Body of pancreas (tissue), 4 donors: ENCODE measurements at regions of chr3 and their contacts with region 1.

Region 1: GRCh38 chr3:46903331-46904071 is 26.0 kb downstream of the PTH1R start:
- DNase-seq: peak in 1 of 4 donors; percentile 14
- ATAC-seq: no peak
- H3K4me3 ChIP-seq: no peak overlapping the region
- H3K27ac ChIP-seq: no peak overlapping the region
- H3K4me1 ChIP-seq: peaks cover 10% of the 10 kb centered on the region
- H3K27me3 ChIP-seq: peaks cover 0 to 2% of the 10 kb centered on the region in 2 donors
- CTCF ChIP-seq: no peak
- POLR2A ChIP-seq: no peak

Region 2: DNA sequence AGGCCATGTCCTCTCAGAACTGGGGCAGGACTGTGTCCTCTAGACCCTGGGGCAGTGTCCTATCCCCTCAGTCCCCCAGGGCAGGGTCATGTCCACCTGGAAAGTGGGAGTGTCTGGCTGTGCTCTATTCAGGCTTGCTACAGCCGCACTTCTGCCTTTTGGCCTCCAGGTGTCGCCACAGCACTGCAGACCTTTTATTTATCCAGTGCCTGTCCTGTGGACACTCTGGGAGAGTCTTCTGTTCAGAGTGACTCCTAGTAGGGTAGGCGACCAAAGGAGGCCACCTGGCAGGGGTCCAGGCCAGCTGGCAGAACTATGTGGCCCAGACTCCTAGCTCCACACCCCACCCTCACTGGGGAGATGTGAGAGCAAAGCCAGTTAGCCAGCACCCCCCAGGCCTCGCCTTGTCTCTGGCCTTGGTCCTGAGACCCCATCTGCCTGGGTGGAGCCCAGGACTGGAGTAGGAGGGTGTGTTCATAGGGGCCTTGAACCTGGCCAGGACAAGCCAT is 198.4 kb before region 1 on chr3:
- intact Hi-C with region 1: loop called (anchors 5 kb)
- DNase-seq: peak; percentile 81 to 84 (median 84)
- ATAC-seq: peak; percentile 85
- H3K4me3 ChIP-seq: no peak overlapping the region
- H3K27ac ChIP-seq: no peak overlapping the region
- H3K4me1 ChIP-seq: peaks cover 12% of the 10 kb centered on the region
- H3K27me3 ChIP-seq: no peaks in the 10 kb centered on the region
- CTCF ChIP-seq: peak; percentile 90 to 98 (median 96)
- POLR2A ChIP-seq: no peak